ENCODE measurements at regions of chr15 and their contacts with region 1.

Region 1: DNA sequence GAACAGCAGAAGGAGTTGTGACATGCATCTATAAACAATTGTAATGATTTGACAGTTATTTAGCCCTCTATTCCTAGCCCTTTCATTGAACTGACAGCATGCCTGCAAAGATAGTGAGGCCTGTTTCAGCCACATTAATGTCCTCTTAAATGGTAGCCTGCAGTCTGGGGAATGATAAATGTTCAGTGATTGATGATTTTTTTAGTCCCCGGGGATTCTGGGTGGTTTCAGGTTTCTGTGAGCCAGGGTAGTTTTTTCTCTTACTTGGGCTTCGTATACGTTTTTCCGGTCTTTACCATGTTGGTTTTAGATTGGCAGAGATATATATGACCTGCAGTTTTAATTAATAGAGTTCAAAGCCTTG is 172.0 kb downstream of the TCF12 start:
- DNase-seq: no peak
- ATAC-seq: no peak
- H3K4me3 ChIP-seq: no peak overlapping the region
- H3K27ac ChIP-seq: no peak overlapping the region
- H3K4me1 ChIP-seq: peaks cover 0 to 6% (median 0%) of the 10 kb centered on the region in 12 donors
- H3K27me3 ChIP-seq: no peaks in the 10 kb centered on the region
- CTCF ChIP-seq: no peak
- POLR2A ChIP-seq: no peak

Region 2: GRCh38 chr15:57031605-57032004 is 58.9 kb before region 1 on chr15:
- intact Hi-C with region 1: loop called in 1 of 10 experiments (anchors 10 kb)
- DNase-seq: peak in 3 of 5 donors; percentile 28 to 49 (median 34)
- ATAC-seq: peak; percentile 57 to 81 (median 66)
- H3K4me3 ChIP-seq: no peak overlapping the region
- H3K27ac ChIP-seq: peak overlapping the region in 4 of 12 donors; percentile 15 to 48 (median 24)
- H3K4me1 ChIP-seq: peaks cover 0 to 35% (median 22%) of the 10 kb centered on the region in 12 donors
- H3K27me3 ChIP-seq: no peaks in the 10 kb centered on the region
- CTCF ChIP-seq: no peak
- POLR2A ChIP-seq: no peak